Dendritic cell treated with granulocyte-macrophage colony-stimulating factor and Interleukin-4, amounts not matched to agents 40 ng/mL and 50 ng/mL, for 4 days (primary cell): ENCODE measurements at regions of chr19 and their contacts with region 1.

Region 1: GRCh38 chr19:2739602-2740313 is at the start of gene SLC39A3:
- H3K4me3 Mint-ChIP-seq: peak within 1 kb of the TSS; percentile 80
- H3K27ac Mint-ChIP-seq: peak within 1 kb of the TSS; percentile 61
- H3K4me1 Mint-ChIP-seq: peaks cover 29% of the 10 kb centered on the region
- H3K27me3 Mint-ChIP-seq: peaks cover 24% of the 10 kb centered on the region

Region 2: GRCh38 chr19:2750808-2751443 is 11.2 kb after region 1 on chr19:
- intact Hi-C with region 1: loop called (anchors 1 kb)
- H3K4me3 Mint-ChIP-seq: no peak overlapping the region
- H3K27ac Mint-ChIP-seq: no peak overlapping the region
- H3K4me1 Mint-ChIP-seq: peaks cover 13% of the 10 kb centered on the region
- H3K27me3 Mint-ChIP-seq: peaks cover 10% of the 10 kb centered on the region

Region 3: GRCh38 chr19:2761309-2761677 is 21.5 kb after region 1 on chr19:
- intact Hi-C with region 1: no loop called
- H3K4me3 Mint-ChIP-seq: no peak overlapping the region
- H3K27ac Mint-ChIP-seq: no peak overlapping the region
- H3K4me1 Mint-ChIP-seq: no peaks in the 10 kb centered on the region
- H3K27me3 Mint-ChIP-seq: no peaks in the 10 kb centered on the region

Region 4: GRCh38 chr19:2782936-2783780 is 43.4 kb after region 1 on chr19 and contains the start of gene SGTA:
- intact Hi-C with region 1: loop called (anchors 1 kb)
- H3K4me3 Mint-ChIP-seq: peak within 1 kb of the TSS; percentile 90
- H3K27ac Mint-ChIP-seq: peak within 1 kb of the TSS; percentile 90
- H3K4me1 Mint-ChIP-seq: peaks cover 56% of the 10 kb centered on the region
- H3K27me3 Mint-ChIP-seq: no peaks in the 10 kb centered on the region